Lower leg skin (tissue), 4 donors: ENCODE measurements at regions of chr19 and their contacts with region 1.

Region 1: DNA sequence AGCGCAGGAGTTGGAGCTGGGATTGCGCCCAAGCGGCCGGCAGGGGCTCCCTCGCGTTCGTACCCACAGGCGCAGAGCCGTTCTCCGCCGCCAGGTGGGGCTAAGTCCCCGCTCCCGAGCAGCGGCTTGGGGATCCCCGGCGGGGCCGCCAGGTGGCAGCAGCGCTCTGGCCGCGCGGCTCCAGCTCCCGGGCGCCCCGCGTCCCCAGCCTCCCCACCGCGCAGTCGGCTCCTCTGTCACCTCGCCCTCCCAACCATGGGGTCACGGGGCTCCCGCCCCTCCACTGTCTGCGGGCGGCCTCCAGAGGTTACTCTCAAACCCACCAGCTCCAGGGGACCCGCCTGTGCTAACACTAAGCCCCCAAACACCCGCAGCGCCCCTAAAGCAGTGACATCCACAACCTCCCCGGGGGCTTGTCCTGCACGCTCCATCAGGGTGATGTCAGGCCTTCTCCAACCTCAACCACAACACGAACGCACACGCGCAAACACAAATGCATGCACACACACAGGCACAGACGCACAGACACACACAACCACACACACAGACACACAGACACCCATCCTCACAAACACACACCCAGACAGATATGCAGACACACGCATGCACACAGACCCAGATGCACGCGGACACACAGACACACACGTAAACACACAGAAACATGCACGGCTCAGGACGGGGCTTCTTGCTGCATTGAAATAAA is 18.4 kb upstream of the KCTD15 start:
- DNase-seq: peak; percentile 55 to 96
- H3K4me3 ChIP-seq: no peak overlapping the region
- CTCF ChIP-seq: peak in 2 of 3 donors; percentile 93 to 99
- POLR2A ChIP-seq: no peak

Region 2: GRCh38 chr19:33755099-33756035 is 22.9 kb before region 1 on chr19:
- intact Hi-C with region 1: no loop called
- DNase-seq: no peak
- H3K4me3 ChIP-seq: no peak overlapping the region
- CTCF ChIP-seq: no peak
- POLR2A ChIP-seq: no peak

Region 3: DNA sequence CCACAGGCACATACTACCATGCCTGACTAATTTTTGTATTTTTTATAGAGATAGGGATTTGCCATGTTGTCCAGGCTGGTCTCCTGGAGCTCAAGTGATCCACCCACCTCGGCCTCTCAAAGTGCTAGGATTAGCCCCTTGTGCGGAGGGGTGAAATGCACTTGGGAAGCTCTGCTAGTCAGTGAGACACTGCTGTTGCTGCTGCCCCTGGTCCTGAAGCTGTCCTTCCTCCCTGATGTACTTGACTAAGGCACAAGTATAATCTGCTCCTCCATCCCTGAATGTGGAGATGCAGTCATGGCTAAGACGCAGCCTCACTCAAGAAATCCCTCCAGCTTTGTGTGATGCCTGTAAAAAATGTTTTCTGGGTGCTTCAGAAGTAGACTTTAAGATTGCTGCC is 142.9 kb after region 1 on chr19:
- intact Hi-C with region 1: no loop called
- DNase-seq: no peak
- H3K4me3 ChIP-seq: no peak overlapping the region
- CTCF ChIP-seq: no peak
- POLR2A ChIP-seq: no peak

Region 4: DNA sequence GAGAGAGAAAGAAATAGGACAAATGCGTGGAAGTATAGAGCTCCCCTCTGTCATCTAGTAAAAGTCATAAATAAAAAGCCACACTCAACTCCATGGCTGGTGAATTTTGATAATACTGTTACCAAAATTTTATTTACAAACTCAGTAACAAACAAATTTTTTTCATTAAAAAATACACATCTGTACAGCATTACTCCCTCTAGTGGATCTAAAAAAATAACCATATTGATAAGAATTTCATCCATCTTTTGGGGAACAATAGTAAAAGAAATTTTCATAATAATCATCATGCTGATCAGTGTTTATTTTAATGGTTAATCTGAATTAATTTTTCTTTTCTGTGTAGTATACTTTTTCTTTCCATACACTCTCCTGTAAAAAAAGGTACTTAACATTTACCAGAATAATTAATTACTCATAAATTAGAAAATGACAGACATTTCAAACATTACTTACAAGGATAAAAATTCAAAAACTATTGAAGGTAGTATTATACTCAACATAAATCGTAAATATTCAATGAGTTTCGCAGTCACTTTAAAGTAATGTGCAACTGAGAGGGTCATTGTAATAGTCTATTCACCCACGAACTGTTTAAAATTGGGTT is 220.6 kb after region 1 on chr19:
- intact Hi-C with region 1: loop called (anchors 5 kb)
- DNase-seq: no peak
- H3K4me3 ChIP-seq: no peak overlapping the region
- CTCF ChIP-seq: no peak
- POLR2A ChIP-seq: no peak

Region 5: DNA sequence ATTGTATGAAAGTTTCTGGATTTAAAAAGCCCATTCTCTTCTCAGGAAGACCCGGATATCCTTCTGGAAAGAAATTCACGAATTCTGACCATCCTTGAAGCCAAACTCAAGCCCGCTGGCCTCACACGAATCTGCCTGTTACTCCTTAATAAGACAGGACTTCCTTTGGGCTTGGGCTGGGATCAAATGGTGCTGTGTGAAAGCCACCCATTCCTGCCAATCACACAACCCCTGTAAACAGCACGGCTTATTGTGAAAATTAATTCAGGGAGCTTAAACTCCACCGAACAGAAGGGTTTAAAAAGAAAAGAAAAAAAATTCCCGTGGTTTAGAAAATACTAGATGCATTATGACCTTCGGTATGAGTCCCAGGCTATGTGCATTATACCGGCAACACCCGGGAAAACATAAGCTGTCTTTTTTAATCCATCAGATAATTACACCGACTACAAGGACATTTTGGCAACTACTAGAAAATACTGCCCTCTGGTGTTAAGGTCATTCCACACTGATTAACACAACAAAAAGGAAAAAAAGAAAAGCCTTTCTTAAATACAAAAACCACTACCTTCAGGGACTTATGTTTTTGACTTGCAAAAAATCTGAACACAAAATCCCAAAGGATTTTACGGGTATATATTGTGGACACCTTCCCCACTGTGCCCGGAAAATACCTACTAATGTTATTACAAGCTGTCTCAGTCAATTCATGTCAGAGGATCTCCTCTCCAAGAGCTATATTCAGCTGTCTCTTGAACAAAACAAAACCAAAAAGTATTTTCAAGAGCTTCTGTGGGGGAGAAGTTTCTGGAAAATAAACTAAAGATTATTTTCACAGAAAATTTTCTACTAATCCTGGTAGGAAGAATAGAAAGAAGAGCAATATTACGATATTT is 318.0 kb after region 1 on chr19:
- intact Hi-C with region 1: loop called (anchors 5 kb)
- DNase-seq: no peak
- H3K4me3 ChIP-seq: no peak overlapping the region
- CTCF ChIP-seq: no peak
- POLR2A ChIP-seq: no peak